Adrenal gland (tissue), 19 donors: ENCODE measurements at regions of chr4 and their contacts with region 1.

Region 1: DNA sequence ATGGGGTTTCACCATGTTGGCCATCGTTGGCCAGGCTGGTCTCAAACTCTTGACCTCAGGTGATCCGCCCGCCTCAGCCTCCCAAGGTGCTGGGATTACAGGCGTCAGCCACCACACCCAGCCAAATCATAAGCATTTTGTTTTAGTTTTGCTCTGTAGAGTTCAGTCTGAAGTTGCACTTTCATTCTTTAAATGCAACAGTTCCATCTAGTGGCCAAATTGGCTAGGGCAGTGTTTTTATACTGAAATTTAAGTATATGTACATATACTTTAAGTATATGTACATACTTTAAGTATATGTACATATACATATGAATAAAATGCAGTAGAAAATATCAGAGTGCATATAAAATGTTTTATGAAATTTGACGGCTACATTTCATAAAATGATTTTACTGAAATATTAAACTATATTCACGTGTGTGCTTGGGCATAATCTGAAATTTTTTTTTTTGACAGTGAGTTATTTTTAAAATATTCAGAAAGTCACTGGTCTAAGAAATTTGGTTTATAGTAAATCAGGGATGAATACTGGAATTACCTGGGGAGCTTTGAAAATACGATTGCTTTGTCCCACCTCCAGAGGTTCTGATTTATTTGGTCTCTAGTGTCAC is 145.5 kb downstream of the NWD2 start:
- DNase-seq: peak in 5 of 7 donors; percentile 9 to 51 (median 39)
- H3K4me3 ChIP-seq: no peak overlapping the region
- H3K27ac ChIP-seq: no peak overlapping the region
- H3K4me1 ChIP-seq: no peaks in the 10 kb centered on the region
- H3K27me3 ChIP-seq: no peaks in the 10 kb centered on the region
- CTCF ChIP-seq: peak; percentile 61 to 85 (median 66)
- POLR2A ChIP-seq: no peak

Region 2: DNA sequence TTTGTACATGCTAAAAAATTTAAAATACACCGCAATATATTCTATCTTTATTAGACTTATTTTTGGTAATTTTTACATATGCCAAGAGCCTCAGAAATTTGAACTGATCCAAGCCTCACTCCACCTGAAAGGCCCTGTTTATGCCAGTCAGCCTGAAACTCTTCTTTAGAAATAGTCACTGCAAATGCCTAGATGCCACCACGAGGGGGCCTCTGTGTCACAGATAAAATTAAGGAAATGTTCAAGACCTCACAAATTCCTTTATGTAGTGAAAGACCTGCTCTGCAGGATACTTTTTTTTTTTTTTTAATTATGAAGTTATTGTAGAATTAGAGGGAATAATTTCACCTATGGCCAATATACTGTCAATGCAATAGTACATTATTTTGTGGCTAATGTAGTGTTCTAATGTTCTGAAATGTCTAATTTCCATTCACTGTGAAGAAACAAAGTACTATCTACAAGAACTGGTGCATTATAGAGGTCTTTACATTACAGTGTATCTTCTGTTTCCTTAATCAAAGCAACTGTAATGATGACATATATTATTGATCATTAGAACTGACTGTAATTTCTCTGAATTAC is 1038.9 kb before region 1 on chr4:
- intact Hi-C with region 1: loop called in 1 of 2 experiments (anchors 5 kb)
- DNase-seq: peak; percentile 56 to 91 (median 77)
- H3K4me3 ChIP-seq: no peak overlapping the region
- H3K27ac ChIP-seq: no peak overlapping the region
- H3K4me1 ChIP-seq: no peaks in the 10 kb centered on the region
- H3K27me3 ChIP-seq: no peaks in the 10 kb centered on the region
- CTCF ChIP-seq: peak; percentile 58 to 83 (median 78)
- POLR2A ChIP-seq: no peak

Region 3: GRCh38 chr4:36414248-36414647 is 975.8 kb before region 1 on chr4:
- intact Hi-C with region 1: loop called in 1 of 2 experiments (anchors 5 kb)
- DNase-seq: no peak
- H3K4me3 ChIP-seq: no peak overlapping the region
- H3K27ac ChIP-seq: no peak overlapping the region
- H3K4me1 ChIP-seq: no peaks in the 10 kb centered on the region
- H3K27me3 ChIP-seq: no peaks in the 10 kb centered on the region
- CTCF ChIP-seq: peak; percentile 20 to 52 (median 38)
- POLR2A ChIP-seq: no peak

Region 4: DNA sequence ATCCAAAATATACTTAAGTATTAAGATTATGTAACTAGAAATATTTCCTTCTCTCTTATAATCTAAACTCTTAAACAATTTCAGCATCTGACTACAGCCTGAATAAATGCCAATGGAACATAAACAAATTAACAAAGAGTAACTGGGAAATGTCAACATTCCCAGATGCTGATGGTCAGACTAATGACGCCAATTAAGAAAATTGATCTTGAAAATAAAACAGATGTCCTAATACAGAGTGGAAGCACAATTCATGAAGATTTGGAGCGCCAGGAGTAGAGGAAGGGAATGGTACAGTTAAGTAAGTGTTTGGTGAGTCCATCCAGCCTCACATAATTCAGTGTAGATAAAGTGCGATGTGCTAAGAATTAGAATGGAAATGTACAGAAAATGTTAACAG is 349.3 kb before region 1 on chr4:
- intact Hi-C with region 1: no loop called
- DNase-seq: no peak
- H3K4me3 ChIP-seq: no peak overlapping the region
- H3K27ac ChIP-seq: no peak overlapping the region
- H3K4me1 ChIP-seq: no peaks in the 10 kb centered on the region
- H3K27me3 ChIP-seq: no peaks in the 10 kb centered on the region
- CTCF ChIP-seq: no peak
- POLR2A ChIP-seq: no peak

Region 5: GRCh38 chr4:37225778-37226177 is 164.3 kb before region 1 on chr4:
- intact Hi-C with region 1: no loop called
- DNase-seq: no peak
- H3K4me3 ChIP-seq: no peak overlapping the region
- H3K27ac ChIP-seq: no peak overlapping the region
- H3K4me1 ChIP-seq: no peaks in the 10 kb centered on the region
- H3K27me3 ChIP-seq: peaks cover 7% of the 10 kb centered on the region
- CTCF ChIP-seq: no peak
- POLR2A ChIP-seq: no peak

Region 6: DNA sequence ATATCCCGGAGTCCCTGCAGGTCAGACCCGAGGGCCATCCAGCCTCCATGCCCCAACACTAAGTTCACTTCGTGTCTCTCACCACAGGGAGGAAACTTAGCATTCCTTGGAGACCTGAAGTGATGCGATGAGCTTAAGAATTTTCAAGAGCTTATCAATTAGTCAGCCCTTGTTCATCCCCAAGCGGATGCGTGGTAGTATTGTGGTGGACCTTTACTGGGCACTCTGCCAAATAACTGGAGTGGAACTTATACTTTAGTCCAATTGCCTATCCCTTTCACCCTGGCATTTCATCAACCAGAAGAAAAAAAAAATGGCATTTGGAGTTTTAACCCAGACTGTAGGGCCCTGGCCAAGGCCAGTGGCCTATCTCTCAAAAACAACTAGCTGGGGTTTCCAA is 159.0 kb after region 1 on chr4:
- intact Hi-C with region 1: no loop called
- DNase-seq: no peak
- H3K4me3 ChIP-seq: no peak overlapping the region
- H3K27ac ChIP-seq: no peak overlapping the region
- H3K4me1 ChIP-seq: no peaks in the 10 kb centered on the region
- H3K27me3 ChIP-seq: no peaks in the 10 kb centered on the region
- CTCF ChIP-seq: no peak
- POLR2A ChIP-seq: no peak

Region 7: GRCh38 chr4:37603070-37603468 is 213.0 kb after region 1 on chr4:
- intact Hi-C with region 1: no loop called
- DNase-seq: peak; percentile 76 to 93 (median 84)
- H3K4me3 ChIP-seq: no peak overlapping the region
- H3K27ac ChIP-seq: no peak overlapping the region
- H3K4me1 ChIP-seq: no peaks in the 10 kb centered on the region
- H3K27me3 ChIP-seq: no peaks in the 10 kb centered on the region
- CTCF ChIP-seq: peak; percentile 94 to 98 (median 96)
- POLR2A ChIP-seq: no peak